Activated T-helper 2 cell treated with anti-CD3 and anti-CD28 coated beads, Interferon-gamma antibody, Interleukin-2, Interleukin-4, amounts not matched to agents 10 μg/mL and 5 μg/mL and 100 μg/mL, durations not matched to agents 14 hours and 24 hours and 36 hours (primary cell): ENCODE measurements at regions of chr16 and their contacts with region 1.

Region 1: DNA sequence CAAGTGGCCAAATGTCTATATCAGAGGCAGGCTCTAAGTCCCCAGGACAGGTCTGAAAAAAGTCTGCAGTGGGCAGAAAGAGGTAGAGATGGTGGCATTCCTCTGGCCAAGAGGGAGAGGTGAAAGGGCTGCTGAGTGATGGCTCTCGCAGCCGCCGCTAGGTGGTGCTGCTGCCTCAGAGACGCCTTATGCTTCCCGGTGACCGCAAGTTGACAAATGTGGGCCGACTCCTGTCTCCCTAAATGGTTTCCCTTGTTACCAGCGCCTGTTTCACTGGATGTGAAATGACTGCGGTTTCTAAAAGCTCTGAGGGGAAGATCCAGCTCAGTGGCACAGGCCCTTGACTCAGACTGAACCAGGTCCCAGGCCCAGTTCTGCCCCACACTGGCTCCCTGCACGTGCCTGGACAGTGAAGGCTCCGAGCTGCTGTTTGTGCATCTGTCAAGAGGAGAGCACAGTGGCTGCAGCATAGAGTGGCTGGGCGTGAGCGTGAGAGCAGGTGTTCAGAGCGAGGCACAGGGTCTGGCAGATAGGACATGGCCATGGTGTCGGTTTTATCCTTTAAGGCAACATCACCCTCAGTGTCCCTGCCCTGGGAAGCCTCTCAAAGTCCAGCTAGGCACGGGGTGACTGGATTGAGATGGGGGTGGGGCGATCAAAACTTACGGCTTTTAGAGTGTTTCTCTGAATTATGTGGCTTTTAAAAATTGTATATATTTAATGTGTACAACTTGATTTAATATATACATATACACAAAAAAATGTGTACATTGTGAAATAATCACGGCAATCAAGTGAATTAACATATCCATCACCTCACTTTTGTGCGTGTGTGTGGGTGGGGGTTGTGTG is 19.9 kb downstream of the CLEC16A start:
- DNase-seq: peak; percentile 77
- H3K4me3 Mint-ChIP-seq: peak overlapping the region; percentile 51
- H3K27ac Mint-ChIP-seq: peak overlapping the region; percentile 94
- H3K4me1 Mint-ChIP-seq: peaks cover 67% of the 10 kb centered on the region
- H3K27me3 Mint-ChIP-seq: no peaks in the 10 kb centered on the region

Region 2: GRCh38 chr16:10981697-10982216 is 17.5 kb after region 1 on chr16:
- intact Hi-C with region 1: no loop called
- DNase-seq: peak; percentile 45
- H3K4me3 Mint-ChIP-seq: peak overlapping the region; percentile 62
- H3K27ac Mint-ChIP-seq: peak overlapping the region; percentile 74
- H3K4me1 Mint-ChIP-seq: peaks cover 72% of the 10 kb centered on the region
- H3K27me3 Mint-ChIP-seq: no peaks in the 10 kb centered on the region

Region 3: GRCh38 chr16:11051879-11052808 is 87.9 kb after region 1 on chr16:
- intact Hi-C with region 1: loop called (anchors 2 kb)
- DNase-seq: peak; percentile 83
- H3K4me3 Mint-ChIP-seq: peak overlapping the region; percentile 43
- H3K27ac Mint-ChIP-seq: peak overlapping the region; percentile 92
- H3K4me1 Mint-ChIP-seq: peaks cover 85% of the 10 kb centered on the region
- H3K27me3 Mint-ChIP-seq: no peaks in the 10 kb centered on the region

Region 4: DNA sequence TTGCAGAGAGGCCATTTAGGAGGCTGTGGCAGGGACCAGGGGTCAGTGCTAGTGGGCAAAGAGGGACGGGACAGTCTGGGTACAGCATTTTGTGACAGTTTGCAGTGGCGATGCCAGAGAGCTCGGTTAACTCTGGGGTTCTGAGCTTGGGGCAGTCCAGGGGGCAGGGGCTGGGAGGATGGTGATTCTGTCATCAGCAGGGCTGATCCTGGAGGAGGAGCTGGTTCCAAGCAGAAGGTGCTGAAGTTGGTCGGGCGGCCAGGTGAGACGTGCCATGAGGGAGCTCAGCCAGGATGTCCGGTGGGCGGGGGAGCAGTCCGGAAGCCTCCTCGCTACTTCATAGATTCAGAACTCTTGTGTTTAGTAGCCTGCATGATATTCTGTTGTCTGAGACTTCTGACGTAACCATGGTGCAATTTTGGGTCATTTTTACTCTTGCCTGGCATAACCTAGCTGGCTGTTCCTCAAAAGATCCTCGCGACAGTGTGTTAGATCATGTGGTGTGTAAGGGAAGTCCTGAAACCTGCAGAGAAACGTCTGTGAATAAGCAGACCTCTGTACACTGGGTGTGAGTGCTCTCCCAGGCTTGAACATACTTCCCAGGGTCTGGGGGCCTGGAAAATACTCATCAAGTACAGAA is 102.1 kb after region 1 on chr16:
- intact Hi-C with region 1: no loop called
- DNase-seq: no peak
- H3K4me3 Mint-ChIP-seq: no peak overlapping the region
- H3K27ac Mint-ChIP-seq: peak overlapping the region; percentile 73
- H3K4me1 Mint-ChIP-seq: peaks cover 62% of the 10 kb centered on the region
- H3K27me3 Mint-ChIP-seq: no peaks in the 10 kb centered on the region

Region 5: GRCh38 chr16:11105038-11105903 is 141.0 kb after region 1 on chr16:
- intact Hi-C with region 1: loop called (anchors 1 kb)
- DNase-seq: peak; percentile 51
- H3K4me3 Mint-ChIP-seq: peak overlapping the region; percentile 55
- H3K27ac Mint-ChIP-seq: peak overlapping the region; percentile 92
- H3K4me1 Mint-ChIP-seq: peaks cover 82% of the 10 kb centered on the region
- H3K27me3 Mint-ChIP-seq: no peaks in the 10 kb centered on the region

Region 6: GRCh38 chr16:11232852-11233726 is 268.8 kb after region 1 on chr16:
- intact Hi-C with region 1: loop called (anchors 1 kb)
- DNase-seq: peak; percentile 91
- H3K4me3 Mint-ChIP-seq: peak overlapping the region; percentile 56
- H3K27ac Mint-ChIP-seq: peak overlapping the region; percentile 98
- H3K4me1 Mint-ChIP-seq: peaks cover 76% of the 10 kb centered on the region
- H3K27me3 Mint-ChIP-seq: no peaks in the 10 kb centered on the region

Region 7: GRCh38 chr16:11356573-11357331 is 392.5 kb after region 1 on chr16:
- intact Hi-C with region 1: loop called (anchors 1 kb)
- DNase-seq: peak; percentile 33
- H3K4me3 Mint-ChIP-seq: no peak overlapping the region
- H3K27ac Mint-ChIP-seq: no peak overlapping the region
- H3K4me1 Mint-ChIP-seq: peaks cover 68% of the 10 kb centered on the region
- H3K27me3 Mint-ChIP-seq: no peaks in the 10 kb centered on the region

Region 8: GRCh38 chr16:11639925-11640899 is 675.9 kb after region 1 on chr16:
- intact Hi-C with region 1: loop called (anchors 5 kb)
- DNase-seq: no peak
- H3K4me3 Mint-ChIP-seq: no peak overlapping the region
- H3K27ac Mint-ChIP-seq: no peak overlapping the region
- H3K4me1 Mint-ChIP-seq: peaks cover 10% of the 10 kb centered on the region
- H3K27me3 Mint-ChIP-seq: peaks cover 8% of the 10 kb centered on the region